ENCODE measurements at regions of chr2 and their contacts with region 1.

Region 1: DNA sequence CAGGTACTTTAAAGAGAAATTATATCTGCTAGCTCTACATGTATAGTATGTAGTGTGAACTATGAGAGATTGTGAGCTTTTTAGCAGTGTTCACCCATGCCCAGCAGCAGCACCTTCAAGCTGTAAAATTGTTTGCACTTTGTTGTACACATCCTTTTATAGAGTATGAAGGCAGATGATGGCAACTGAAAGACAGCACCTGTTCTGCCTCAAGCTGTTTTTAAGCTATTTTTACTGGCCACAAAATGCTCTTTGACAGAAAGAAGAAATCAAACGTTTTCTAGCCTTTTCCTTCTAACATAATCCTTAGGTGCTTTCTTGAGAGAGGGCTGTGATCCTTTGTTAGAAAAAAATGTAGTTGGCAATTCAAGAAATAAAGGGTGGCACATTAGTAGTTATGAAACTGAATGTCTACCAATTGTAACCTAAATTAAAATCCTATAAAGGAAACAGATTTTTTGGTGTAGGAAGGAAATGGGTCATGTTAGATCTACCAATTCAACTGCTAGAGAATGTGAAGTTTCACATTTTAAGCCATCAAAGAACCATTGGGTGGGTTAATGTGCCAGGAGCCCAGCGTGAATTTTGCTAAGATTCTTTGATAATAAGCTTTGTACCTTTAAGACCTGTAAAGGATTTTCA is 59.5 kb downstream of the R3HDM1 start:
- DNase-seq: peak in 1 of 9 experiments; percentile 25
- ATAC-seq: peak; percentile 63
- H3K4me3 ChIP-seq: peak overlapping the region in 1 of 2 experiments; percentile 11
- H3K4me3 Mint-ChIP-seq: peak overlapping the region; percentile 59
- H3K27ac ChIP-seq: peak overlapping the region; percentile 18 to 23
- H3K27ac Mint-ChIP-seq: peak overlapping the region; percentile 90
- H3K4me1 ChIP-seq: peaks cover 22% of the 10 kb centered on the region
- H3K4me1 Mint-ChIP-seq: peaks cover 48% of the 10 kb centered on the region
- H3K27me3 ChIP-seq: no peaks in the 10 kb centered on the region
- H3K27me3 Mint-ChIP-seq: no peaks in the 10 kb centered on the region
- CTCF ChIP-seq: no peak

Region 2: GRCh38 chr2:135664623-135665068 is 73.9 kb after region 1 on chr2:
- CTCF ChIA-PET with region 1: no interaction called
- POLR2A ChIA-PET with region 1: no interaction called
- intact Hi-C with region 1: loop called in 1 of 2 experiments (anchors 10 kb)
- DNase-seq: no peak
- ATAC-seq: no peak
- H3K4me3 ChIP-seq: no peak overlapping the region
- H3K4me3 Mint-ChIP-seq: no peak overlapping the region
- H3K27ac ChIP-seq: no peak overlapping the region
- H3K27ac Mint-ChIP-seq: peak overlapping the region; percentile 1
- H3K4me1 ChIP-seq: peaks cover 3% of the 10 kb centered on the region
- H3K4me1 Mint-ChIP-seq: peaks cover 29% of the 10 kb centered on the region
- H3K27me3 ChIP-seq: no peaks in the 10 kb centered on the region
- H3K27me3 Mint-ChIP-seq: no peaks in the 10 kb centered on the region
- CTCF ChIP-seq: no peak